GM10248 (cell line): ENCODE measurements at regions of chr3 and their contacts with region 1.

Region 1: GRCh38 chr3:9890249-9891071 is at the start of gene JAGN1:
- DNase-seq: peak; percentile 95
- CTCF ChIP-seq: no peak

Region 2: DNA sequence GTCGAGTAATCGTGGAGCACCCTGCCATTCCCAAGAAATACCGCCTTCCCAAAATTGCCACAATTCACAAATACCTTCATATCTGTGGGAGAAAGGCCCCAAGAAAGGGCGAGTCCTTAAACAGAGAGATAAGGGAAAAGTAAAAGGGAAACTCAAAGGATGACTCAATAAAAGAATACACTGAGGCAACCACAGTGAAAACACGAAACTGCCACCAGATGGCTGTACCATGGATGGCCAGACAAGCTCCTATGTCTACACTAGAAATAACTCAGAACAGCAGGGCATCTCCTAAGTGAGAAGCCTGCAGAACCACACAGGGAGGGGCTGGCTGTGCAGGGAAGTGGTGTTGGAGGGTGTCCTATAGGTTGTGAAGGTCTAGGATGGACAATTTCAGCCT is 666.0 kb before region 1 on chr3:
- CTCF ChIA-PET with region 1: no interaction called
- POLR2A ChIA-PET with region 1: no interaction called
- DNase-seq: peak; percentile 77
- CTCF ChIP-seq: peak; percentile 39

Region 3: GRCh38 chr3:9878700-9879099 is 11.8 kb before region 1 on chr3:
- CTCF ChIA-PET with region 1: interaction called, 12 read pairs
- POLR2A ChIA-PET with region 1: no interaction called
- DNase-seq: no peak
- CTCF ChIP-seq: no peak